MCF 10A (cell line): ENCODE measurements at regions of chrX and their contacts with region 1.

Region 1: GRCh38 chrX:70096052-70096451 is 33.8 kb downstream of the OTUD6A start:
- DNase-seq: peak; percentile 51
- H3K4me3 Mint-ChIP-seq: no peak overlapping the region
- H3K27ac Mint-ChIP-seq: no peak overlapping the region
- H3K4me1 Mint-ChIP-seq: no peaks in the 10 kb centered on the region
- H3K27me3 Mint-ChIP-seq: peaks cover 24% of the 10 kb centered on the region
- CTCF ChIP-seq: peak; percentile 39

Region 2: GRCh38 chrX:68822641-68823410 is 1273.2 kb before region 1 on chrX:
- CTCF ChIA-PET with region 1: interaction called, 5 read pairs
- POLR2A ChIA-PET with region 1: no interaction called
- intact Hi-C with region 1: loop called (anchors 5 kb)
- DNase-seq: peak; percentile 65
- H3K4me3 Mint-ChIP-seq: no peak overlapping the region
- H3K27ac Mint-ChIP-seq: no peak overlapping the region
- H3K4me1 Mint-ChIP-seq: peaks cover 11% of the 10 kb centered on the region
- H3K27me3 Mint-ChIP-seq: peaks cover 40% of the 10 kb centered on the region
- CTCF ChIP-seq: peak; percentile 76

Region 3: GRCh38 chrX:69493193-69493592 is 602.9 kb before region 1 on chrX:
- CTCF ChIA-PET with region 1: interaction called, 51 read pairs
- POLR2A ChIA-PET with region 1: interaction called, 6 read pairs
- intact Hi-C with region 1: loop called (anchors 5 kb)
- DNase-seq: peak; percentile 71
- H3K4me3 Mint-ChIP-seq: no peak overlapping the region
- H3K27ac Mint-ChIP-seq: no peak overlapping the region
- H3K4me1 Mint-ChIP-seq: peaks cover 7% of the 10 kb centered on the region
- H3K27me3 Mint-ChIP-seq: peaks cover 66% of the 10 kb centered on the region
- CTCF ChIP-seq: peak; percentile 69

Region 4: GRCh38 chrX:69543572-69543971 is 552.5 kb before region 1 on chrX:
- CTCF ChIA-PET with region 1: interaction called, 92 read pairs
- POLR2A ChIA-PET with region 1: no interaction called
- intact Hi-C with region 1: loop called (anchors 5 kb)
- DNase-seq: no peak
- H3K4me3 Mint-ChIP-seq: no peak overlapping the region
- H3K27ac Mint-ChIP-seq: no peak overlapping the region
- H3K4me1 Mint-ChIP-seq: no peaks in the 10 kb centered on the region
- H3K27me3 Mint-ChIP-seq: peaks cover 27% of the 10 kb centered on the region
- CTCF ChIP-seq: no peak

Region 5: DNA sequence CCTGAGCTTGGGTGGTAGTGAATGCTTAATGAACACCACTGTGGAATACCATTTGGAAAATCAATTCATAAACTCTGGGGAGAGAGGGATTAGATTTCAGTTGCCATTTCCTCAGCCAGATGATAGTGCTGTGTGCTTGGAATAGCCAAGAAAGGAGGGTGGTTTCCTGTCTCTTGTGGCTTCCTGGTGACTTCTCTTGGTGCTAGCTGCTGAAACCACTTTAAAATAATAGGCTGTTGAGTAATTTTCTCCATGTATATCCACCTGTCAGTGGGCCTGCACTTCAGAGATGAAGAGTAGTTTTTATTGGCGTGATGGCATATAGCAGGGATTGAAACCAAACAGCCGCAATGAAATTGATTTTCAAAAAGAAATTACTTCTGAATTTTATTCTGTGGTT is 468.3 kb before region 1 on chrX:
- CTCF ChIA-PET with region 1: interaction called, 11 read pairs
- POLR2A ChIA-PET with region 1: no interaction called
- intact Hi-C with region 1: no loop called
- DNase-seq: no peak
- H3K4me3 Mint-ChIP-seq: no peak overlapping the region
- H3K27ac Mint-ChIP-seq: no peak overlapping the region
- H3K4me1 Mint-ChIP-seq: no peaks in the 10 kb centered on the region
- H3K27me3 Mint-ChIP-seq: peaks cover 40% of the 10 kb centered on the region
- CTCF ChIP-seq: no peak

Region 6: DNA sequence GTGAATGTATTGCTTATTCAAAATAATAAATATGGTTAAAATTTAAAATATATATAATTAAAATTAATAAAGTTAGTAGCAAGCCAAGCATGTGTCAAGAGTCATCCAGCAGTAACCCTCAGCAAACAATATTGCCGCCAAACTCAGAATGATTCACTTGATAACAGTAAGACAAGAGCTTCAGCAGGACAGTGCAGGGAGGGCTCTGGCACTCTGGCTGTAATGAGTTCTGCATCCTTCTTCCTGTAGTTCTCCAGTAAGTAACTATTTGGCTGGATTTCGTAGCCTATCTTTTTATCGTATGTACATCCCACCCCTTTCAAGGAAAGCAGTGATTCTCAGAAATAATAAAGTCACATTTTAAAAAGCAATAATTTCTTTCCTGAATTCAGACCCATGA is 16.2 kb before region 1 on chrX:
- CTCF ChIA-PET with region 1: interaction called, 36 read pairs
- POLR2A ChIA-PET with region 1: no interaction called
- intact Hi-C with region 1: no loop called
- DNase-seq: no peak
- H3K4me3 Mint-ChIP-seq: no peak overlapping the region
- H3K27ac Mint-ChIP-seq: no peak overlapping the region
- H3K4me1 Mint-ChIP-seq: no peaks in the 10 kb centered on the region
- H3K27me3 Mint-ChIP-seq: peaks cover 40% of the 10 kb centered on the region
- CTCF ChIP-seq: no peak